ENCODE measurements at regions of chr18 and their contacts with region 1.

Region 1: DNA sequence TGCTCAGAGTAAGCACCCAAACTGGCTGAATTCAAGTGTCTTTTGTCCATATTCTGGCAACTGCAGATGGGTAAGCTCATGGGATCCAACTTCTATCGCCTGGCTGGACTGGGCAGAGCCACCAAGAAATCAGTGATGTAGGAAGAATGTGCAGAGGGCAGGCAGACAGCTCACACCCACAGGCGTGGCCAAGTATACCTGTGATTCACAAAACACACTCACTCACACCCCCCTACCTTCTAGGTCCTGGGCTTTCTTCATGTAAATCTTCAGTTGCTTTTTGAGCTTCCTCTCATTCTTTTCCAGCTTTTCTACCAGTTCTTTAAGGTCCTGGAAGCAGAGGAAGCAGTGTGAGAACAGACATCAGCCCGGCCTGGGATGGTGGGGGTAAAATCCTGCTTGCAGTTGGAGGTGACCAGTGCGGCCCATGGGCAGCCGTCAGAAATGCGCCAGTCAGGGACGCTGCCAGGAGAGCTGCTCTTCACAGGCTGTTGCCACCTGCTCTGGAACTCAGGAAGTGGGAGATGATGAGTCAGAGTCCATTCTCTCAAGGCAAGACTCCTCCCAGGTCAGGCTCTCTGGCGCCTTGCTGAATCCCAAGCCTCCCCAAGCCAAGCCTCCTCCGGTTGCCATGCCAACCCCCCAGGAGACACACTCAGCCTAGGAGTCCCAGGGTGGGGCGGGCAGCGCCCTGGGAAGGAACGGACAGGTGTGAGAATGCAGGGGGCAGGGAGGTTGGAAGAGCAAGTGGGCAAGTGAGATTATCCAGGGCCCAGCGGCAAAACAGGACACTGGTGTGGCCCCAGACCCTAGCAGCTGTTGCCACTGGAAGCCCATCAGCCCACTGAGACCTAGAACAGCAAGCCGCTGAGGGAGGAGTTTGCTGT is 36.2 kb upstream of the ACAA2 start:
- DNase-seq: peak; percentile 80
- H3K4me3 ChIP-seq: no peak overlapping the region
- H3K27ac ChIP-seq: no peak overlapping the region
- H3K4me1 ChIP-seq: peaks cover 13% of the 10 kb centered on the region
- H3K27me3 ChIP-seq: no peaks in the 10 kb centered on the region
- CTCF ChIP-seq: no peak
- POLR2A ChIP-seq: no peak

Region 2: DNA sequence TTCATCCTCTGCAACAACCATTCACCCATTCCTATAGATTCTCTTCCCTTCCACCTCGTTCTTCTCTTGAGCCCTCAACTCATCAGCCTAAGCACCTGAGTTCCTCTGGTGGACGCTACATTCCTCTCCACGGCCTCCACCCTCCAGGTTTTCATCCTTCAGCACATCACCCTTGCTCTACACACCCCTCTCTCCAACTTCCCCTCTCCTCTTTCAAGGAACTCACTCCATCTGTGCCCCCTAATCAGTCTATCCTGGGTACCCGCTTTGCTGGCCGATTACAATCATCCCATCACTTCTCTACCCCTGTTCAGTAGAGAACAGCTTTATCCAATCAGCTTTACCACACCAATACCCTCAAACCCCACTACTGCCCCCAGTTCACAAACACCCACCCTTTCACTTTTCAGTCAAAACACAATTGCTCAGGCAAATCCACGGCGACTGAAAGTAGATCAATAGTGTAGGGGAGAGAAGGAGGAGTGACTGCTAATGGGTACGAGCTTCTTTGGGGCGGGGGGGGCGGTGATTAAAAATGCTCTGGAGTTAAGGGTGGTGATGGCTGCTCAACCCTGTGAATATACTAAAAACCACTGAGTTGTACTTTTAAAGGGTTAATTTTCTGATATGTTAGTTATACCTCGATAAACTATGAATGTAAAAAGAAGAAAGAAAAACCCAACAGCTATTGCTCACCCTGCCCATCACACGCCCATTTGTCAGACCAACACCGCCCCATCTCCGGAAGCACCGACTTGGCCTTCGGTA is 390.0 kb before region 1 on chr18:
- CTCF ChIA-PET with region 1: no interaction called
- POLR2A ChIA-PET with region 1: no interaction called
- dilution Hi-C with region 1: no loop called
- intact Hi-C with region 1: no loop called
- DNase-seq: peak; percentile 8
- H3K4me3 ChIP-seq: peak overlapping the region; percentile 57 to 99 (median 87)
- H3K27ac ChIP-seq: peak overlapping the region; percentile 49
- H3K4me1 ChIP-seq: peaks cover 18% of the 10 kb centered on the region
- H3K27me3 ChIP-seq: no peaks in the 10 kb centered on the region
- CTCF ChIP-seq: no peak
- POLR2A ChIP-seq: no peak

Region 3: DNA sequence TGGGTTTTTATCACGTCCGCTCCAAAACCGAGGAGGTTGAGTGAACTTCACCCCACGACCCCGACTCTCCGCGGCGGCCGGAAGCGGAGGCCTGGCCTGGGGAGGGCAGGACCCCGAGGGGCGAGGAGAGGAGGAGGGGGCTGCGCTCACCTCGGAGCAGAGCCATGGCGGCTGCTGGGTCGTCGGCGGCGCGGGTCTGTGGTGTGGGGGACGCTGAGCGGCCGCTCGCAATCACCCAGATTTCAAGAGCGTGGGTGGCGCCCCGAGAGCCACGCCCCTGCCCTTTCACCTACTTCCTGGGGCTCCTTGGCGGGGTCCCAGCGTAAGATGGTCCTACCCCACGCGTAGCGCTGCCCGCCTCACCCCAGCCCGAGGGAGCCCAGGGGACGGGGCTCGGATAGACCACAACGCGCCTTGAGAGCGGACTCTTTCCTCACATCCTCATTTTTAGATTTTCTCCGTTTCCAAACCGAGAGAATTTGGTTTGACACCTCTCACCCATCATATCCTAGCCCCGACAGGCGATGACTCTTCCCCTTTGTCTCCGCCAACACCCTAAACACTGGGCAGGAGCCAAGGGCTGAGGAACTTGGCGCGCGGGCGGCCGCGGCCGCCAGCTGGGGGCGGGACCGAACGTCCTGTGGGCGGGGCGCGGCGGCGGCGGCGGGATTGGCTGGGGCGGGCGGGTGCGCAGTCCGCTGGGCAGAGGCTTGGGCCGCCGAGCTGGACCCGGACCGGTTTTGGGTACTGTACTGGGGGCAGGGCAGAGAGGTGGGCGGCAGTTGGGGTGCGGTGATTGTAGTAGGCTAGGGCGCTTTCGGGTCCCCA is 36.0 kb before region 1 on chr18 and contains the start of gene ACAA2:
- CTCF ChIA-PET with region 1: interaction called, 3 read pairs
- POLR2A ChIA-PET with region 1: no interaction called
- dilution Hi-C with region 1: no loop called
- intact Hi-C with region 1: loop called (anchors 1 kb)
- DNase-seq: peak; percentile 83
- H3K4me3 ChIP-seq: peak within 1 kb of the TSS; percentile 48 to 75 (median 64)
- H3K27ac ChIP-seq: peak within 1 kb of the TSS; percentile 94
- H3K4me1 ChIP-seq: peaks cover 12% of the 10 kb centered on the region
- H3K27me3 ChIP-seq: no peaks in the 10 kb centered on the region
- CTCF ChIP-seq: no peak
- POLR2A ChIP-seq: peak; percentile 93
- total RNA-seq, gene ACAA2: 44.4 and 44.9 TPM in 2 replicates

Measured in endothelial cell of umbilical vein (primary cell).